ENCODE measurements at regions of chr17 and their contacts with region 1.

Region 1: DNA sequence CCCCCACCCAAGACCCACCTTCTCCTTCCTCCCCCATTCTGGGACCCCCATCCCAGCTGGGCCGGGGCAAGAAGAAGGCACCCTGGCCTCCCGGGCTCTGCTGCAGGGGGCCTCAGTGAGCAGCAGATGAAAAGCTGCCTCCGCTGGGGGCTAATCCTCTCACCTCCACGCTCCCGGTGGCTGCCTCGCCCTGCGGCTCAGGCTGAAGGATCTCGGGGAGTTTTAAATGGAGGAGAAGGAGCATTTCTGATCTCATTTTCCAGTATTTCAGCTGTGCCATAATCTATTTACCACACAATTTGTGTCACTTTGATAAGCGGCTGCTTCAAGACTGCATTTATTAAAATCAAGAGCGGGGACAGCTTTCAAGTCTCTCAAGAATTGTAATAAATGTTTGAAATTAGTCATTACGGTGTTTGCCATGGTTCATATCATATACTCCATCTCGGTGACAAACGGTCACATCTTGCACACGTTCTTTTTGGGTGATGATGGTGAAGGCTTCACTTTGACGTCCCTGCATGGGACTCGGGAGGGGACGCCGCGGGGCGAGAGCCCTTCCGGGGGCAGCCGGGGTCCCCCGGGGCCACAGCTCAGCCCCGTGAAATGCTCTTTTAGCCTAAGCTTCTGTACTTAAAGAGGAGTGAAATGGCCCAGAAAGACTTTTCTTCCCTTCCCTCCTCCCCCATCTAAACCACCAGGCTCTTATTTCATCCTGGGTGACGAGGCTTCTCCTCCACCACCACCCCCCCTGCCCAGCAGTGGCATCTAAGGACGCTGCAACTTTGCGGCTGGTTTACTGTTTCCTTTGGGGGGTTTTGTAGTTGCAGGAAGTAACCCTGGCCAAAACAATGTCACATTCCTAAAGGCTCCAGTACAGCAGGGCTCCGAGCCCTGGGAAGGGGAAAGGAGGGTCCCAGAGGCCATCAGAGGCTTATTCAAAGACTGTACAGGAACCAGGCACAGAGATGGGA is 313.1 kb upstream of the TNRC6C start:
- DNase-seq: peak; percentile 37 to 77 (median 62)
- H3K4me3 ChIP-seq: peak overlapping the region; percentile 18
- H3K4me3 Mint-ChIP-seq: peak overlapping the region; percentile 75 to 93 (median 89)
- H3K27ac ChIP-seq: no peak overlapping the region
- H3K27ac Mint-ChIP-seq: peak overlapping the region; percentile 63 to 96 (median 92)
- H3K4me1 ChIP-seq: peaks cover 21% of the 10 kb centered on the region
- H3K4me1 Mint-ChIP-seq: peaks cover 17 to 34% (median 34%) of the 10 kb centered on the region in 3 donors
- H3K27me3 ChIP-seq: no peaks in the 10 kb centered on the region
- H3K27me3 Mint-ChIP-seq: peaks cover 2% of the 10 kb centered on the region in 2 donors

Region 2: GRCh38 chr17:77280980-77281903 is 364.1 kb before region 1 on chr17:
- CTCF ChIA-PET with region 1: no interaction called
- POLR2A ChIA-PET with region 1: no interaction called
- DNase-seq: peak; percentile 49 to 75 (median 68)
- H3K4me3 ChIP-seq: peak overlapping the region; percentile 41
- H3K4me3 Mint-ChIP-seq: peak overlapping the region; percentile 32 to 85 (median 76)
- H3K27ac ChIP-seq: no peak overlapping the region
- H3K27ac Mint-ChIP-seq: peak overlapping the region in 5 of 8 donors; percentile 42 to 96 (median 66)
- H3K4me1 ChIP-seq: peaks cover 14% of the 10 kb centered on the region
- H3K4me1 Mint-ChIP-seq: peaks cover 11 to 16% (median 14%) of the 10 kb centered on the region in 3 donors
- H3K27me3 ChIP-seq: peaks cover 8% of the 10 kb centered on the region
- H3K27me3 Mint-ChIP-seq: peaks cover 16 to 28% of the 10 kb centered on the region in 2 donors

Region 3: DNA sequence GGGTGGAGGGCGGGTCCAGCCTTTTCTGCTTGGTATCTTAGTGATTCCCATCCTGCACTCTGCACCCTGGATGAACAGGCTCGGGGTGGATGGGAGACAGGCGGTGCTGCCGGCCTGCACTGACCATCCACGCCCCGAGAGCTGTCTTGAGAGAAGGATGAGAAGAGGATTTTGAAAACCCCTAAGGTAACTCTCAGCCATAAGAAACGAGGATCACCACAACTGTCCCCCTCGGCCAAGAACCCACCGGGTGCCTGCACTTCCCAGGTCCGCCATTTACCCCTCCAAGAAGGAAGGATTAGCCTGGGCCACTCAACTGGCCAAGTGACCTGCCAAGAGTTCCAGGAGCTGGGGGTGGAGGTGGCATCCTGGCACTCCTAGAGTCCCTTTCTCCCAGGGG is 10.7 kb after region 1 on chr17:
- CTCF ChIA-PET with region 1: no interaction called
- POLR2A ChIA-PET with region 1: no interaction called
- DNase-seq: no peak
- H3K4me3 ChIP-seq: no peak overlapping the region
- H3K4me3 Mint-ChIP-seq: no peak overlapping the region
- H3K27ac ChIP-seq: no peak overlapping the region
- H3K27ac Mint-ChIP-seq: no peak overlapping the region
- H3K4me1 ChIP-seq: no peaks in the 10 kb centered on the region
- H3K4me1 Mint-ChIP-seq: no peaks in the 10 kb centered on the region
- H3K27me3 ChIP-seq: no peaks in the 10 kb centered on the region
- H3K27me3 Mint-ChIP-seq: peaks cover 7 to 22% of the 10 kb centered on the region in 2 donors

Region 4: DNA sequence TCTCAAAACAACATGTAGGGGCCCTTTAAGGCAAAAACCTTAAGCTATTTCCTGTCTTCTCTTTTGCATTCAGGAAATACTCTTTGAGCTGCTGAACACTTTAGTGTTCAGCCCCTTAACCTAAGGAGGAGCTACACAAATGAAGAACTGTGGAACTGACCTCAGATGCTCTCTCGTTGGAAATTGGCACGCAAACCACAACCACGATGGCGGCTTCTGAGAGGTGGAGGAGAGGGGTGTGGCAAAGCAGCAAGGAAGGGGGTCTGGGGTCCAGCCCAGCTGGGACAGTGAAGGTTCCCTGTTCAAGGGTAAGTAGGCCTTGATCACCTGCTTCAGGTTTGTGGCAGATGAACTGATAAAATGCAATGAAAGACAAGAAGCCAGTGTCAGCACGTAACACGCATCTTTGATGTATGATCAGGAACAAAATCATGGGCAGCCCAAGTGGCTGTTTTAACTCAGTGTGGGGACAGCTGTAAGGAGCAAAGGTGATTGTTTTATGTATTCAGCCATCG is 21.6 kb after region 1 on chr17:
- CTCF ChIA-PET with region 1: interaction called, 43 read pairs
- POLR2A ChIA-PET with region 1: interaction called, 4 read pairs
- DNase-seq: peak; percentile 50 to 86 (median 76)
- H3K4me3 ChIP-seq: peak overlapping the region; percentile 86
- H3K4me3 Mint-ChIP-seq: peak overlapping the region; percentile 82 to 94 (median 90)
- H3K27ac ChIP-seq: peak overlapping the region; percentile 47
- H3K27ac Mint-ChIP-seq: peak overlapping the region; percentile 75 to 99 (median 96)
- H3K4me1 ChIP-seq: peaks cover 45% of the 10 kb centered on the region
- H3K4me1 Mint-ChIP-seq: peaks cover 48 to 64% (median 55%) of the 10 kb centered on the region in 3 donors
- H3K27me3 ChIP-seq: no peaks in the 10 kb centered on the region
- H3K27me3 Mint-ChIP-seq: peaks cover 0 to 1% of the 10 kb centered on the region in 2 donors

Region 5: DNA sequence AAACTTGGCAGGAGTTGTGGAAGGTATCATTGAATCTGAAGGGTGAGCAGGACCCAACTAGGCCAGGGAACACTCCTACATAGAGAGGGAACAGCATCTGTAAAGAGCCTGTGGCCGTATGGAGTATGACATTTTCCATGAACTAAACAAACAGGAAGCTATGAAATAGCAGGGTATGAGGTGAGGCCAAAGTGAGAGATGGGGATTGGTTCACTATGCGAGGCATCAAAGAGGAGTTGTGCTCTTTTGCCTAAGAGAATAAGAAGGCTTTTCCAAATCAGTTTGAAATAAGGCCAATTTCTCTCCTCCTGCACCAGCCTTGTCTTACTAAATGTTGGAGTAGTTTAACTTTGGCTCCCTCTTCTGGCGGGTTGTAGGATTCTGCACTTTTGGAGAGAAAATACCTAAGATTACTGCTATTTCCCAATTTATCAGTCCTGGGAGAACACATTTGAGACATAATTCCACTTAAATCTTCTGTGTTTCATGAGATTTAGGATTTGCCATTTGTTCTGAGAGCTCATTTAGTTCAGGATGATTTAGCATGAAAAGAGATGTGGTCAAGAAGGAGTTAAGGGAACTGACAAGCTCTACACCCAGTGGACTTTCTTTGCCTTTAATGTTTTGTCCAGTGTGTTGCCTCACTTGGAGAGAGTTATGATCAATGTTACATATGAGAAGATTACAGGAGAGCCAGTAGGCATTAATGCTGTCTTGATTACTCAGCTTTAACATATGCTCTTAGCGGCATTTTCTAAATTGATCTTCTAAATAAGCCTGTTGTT is 368.5 kb after region 1 on chr17:
- CTCF ChIA-PET with region 1: interaction called, 20 read pairs
- POLR2A ChIA-PET with region 1: no interaction called
- DNase-seq: peak; percentile 34 to 58 (median 37)
- H3K4me3 ChIP-seq: no peak overlapping the region
- H3K4me3 Mint-ChIP-seq: peak overlapping the region in 1 of 7 donors; percentile 33
- H3K27ac ChIP-seq: no peak overlapping the region
- H3K27ac Mint-ChIP-seq: peak overlapping the region in 4 of 8 donors; percentile 10 to 54 (median 18)
- H3K4me1 ChIP-seq: peaks cover 6% of the 10 kb centered on the region
- H3K4me1 Mint-ChIP-seq: peaks cover 28 to 36% (median 35%) of the 10 kb centered on the region in 3 donors
- H3K27me3 ChIP-seq: no peaks in the 10 kb centered on the region
- H3K27me3 Mint-ChIP-seq: no peaks in the 10 kb centered on the region

Measured in CD8-positive, alpha-beta memory T cell (primary cell).